ENCODE measurements at regions of chr2 and their contacts with region 1.

Region 1: GRCh38 chr2:161004379-161004778 is 155.8 kb upstream of the TANK start:
- DNase-seq: no peak
- H3K4me3 ChIP-seq: no peak overlapping the region
- H3K27ac ChIP-seq: no peak overlapping the region
- H3K4me1 ChIP-seq: no peaks in the 10 kb centered on the region
- H3K27me3 ChIP-seq: no peaks in the 10 kb centered on the region
- CTCF ChIP-seq: peak in 2 of 5 experiments; percentile 19 to 21
- EP300 ChIP-seq: no peak
- POLR2A ChIP-seq: no peak

Region 2: DNA sequence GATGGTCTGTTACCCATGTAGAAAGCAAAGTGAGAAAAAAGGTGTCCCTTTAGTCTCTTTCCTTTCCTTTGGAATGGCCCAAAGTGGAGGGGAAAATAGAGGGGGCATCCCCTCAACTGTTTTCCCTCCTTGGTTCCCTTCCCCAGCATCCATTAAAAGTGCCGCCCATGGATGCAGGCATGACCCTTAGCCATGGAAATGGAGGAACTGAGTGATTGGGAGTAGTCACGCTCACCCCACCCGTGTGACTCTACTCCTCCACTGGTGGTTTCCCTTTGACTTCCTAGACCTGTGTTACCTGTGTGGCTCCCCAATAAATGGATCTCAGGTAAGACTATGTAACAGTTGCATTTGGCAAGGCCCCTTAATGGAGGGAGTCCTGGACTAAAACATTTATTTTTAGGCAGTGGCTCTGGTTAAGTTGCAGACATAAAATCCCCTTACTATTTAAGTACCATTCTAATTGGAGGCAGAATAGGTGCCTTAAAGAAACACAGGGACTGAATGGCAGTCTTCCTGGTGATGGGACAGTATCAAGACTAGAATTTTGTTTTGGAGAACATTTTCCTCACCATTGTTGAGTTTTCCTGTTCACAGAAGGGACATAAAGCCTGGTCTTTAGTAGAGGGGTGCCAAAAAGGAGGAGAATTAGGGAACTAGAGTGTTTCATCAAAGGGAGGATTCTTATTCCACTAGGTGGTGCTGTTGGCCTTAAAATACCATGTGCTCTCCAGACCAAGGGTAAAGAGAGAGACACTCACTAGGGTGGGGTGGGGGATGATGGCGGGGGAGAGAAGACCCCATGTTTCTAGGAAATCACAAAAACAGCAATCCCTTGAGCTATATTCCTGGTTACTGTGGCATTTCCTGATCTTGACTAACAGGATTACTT is 916.3 kb before region 1 on chr2:
- in situ Hi-C with region 1: loop called in 1 of 4 experiments (anchors 25 kb)
- intact Hi-C with region 1: no loop called
- DNase-seq: no peak
- H3K4me3 ChIP-seq: no peak overlapping the region
- H3K27ac ChIP-seq: no peak overlapping the region
- H3K4me1 ChIP-seq: no peaks in the 10 kb centered on the region
- H3K27me3 ChIP-seq: no peaks in the 10 kb centered on the region
- CTCF ChIP-seq: peak in 3 of 5 experiments; percentile 24 to 36 (median 30)
- EP300 ChIP-seq: no peak
- POLR2A ChIP-seq: no peak